AG04449 (cell line): ENCODE measurements at regions of chr5 and their contacts with region 1.

Region 1: DNA sequence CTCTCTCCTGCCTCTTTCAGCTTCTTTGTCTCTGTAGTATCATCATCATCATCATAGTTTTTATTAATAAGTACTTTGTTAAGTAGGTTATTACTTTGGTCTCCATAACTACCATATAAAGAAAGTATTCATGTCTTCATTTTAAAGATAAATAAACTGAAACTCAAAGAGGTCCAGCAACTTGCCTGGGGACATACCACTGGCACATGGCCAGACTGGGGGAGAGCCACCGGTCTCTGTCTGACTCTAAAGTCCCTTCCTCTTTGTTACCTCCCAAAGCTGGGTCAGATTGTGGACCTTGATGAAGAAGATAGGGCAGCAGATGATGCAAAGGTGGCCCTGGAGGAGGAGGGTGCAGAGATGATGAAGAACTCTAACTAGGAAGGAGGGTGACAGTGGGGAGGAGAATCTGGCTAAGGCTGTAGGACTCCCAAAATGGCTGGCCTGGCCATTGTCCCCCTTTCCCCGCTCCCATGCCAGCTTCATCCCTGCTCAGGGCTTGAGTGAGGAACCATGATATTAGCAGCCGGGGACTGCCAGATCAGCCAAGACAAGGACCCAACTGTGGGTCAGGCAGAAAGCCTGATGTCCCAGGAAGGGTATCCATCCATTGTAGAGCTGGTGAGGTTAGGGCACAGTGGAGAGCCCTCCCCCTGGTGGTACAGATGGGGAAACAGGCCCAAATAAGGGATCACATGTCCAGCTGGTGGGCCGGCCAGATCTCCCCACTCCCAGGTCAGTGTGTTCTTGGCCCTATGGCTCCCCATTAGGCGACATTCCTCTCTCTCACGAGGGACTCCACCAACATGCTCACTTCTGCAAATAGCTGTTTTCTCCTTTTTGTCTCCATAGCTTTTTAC is 8.7 kb downstream of the CDX1 start:
- DNase-seq: no peak
- H3K4me3 ChIP-seq: no peak overlapping the region
- CTCF ChIP-seq: peak; percentile 72

Region 2: GRCh38 chr5:149969181-149969930 is 205.9 kb before region 1 on chr5:
- CTCF ChIA-PET with region 1: no interaction called
- POLR2A ChIA-PET with region 1: no interaction called
- DNase-seq: no peak
- H3K4me3 ChIP-seq: no peak overlapping the region
- CTCF ChIP-seq: no peak

Region 3: DNA sequence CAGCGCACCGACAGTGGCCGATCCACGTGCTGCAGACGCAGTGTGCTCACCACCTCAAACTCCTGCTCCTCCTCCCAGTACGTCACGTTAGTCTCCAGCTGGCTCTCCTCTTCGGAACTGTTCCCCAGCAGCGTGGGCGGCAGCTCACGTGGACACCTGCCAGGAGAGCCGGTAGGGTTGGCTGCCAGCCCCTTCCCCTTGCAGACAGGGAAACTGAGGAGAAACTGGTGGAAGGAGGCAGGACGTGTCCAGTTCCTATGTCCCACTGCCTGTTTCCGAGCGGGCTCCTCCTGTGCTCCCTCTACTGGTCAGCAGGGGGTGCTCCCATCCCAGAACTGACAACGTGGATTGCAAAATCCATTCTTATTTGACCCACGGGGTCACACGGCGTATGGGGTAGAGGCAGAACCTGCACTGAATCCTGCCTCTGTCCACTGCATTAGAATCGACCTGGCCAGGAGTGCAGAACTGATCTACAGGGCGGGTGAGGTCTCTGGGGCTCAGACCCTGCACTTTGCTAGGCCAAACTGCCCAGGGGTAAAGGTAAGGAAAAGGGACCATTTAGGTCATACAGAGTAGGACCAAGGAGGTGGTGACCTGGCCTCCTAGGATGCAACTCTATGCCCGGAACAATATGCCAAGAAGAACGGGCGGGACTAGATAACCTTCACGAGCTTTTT is 45.4 kb before region 1 on chr5:
- CTCF ChIA-PET with region 1: interaction called, 18 read pairs
- POLR2A ChIA-PET with region 1: no interaction called
- DNase-seq: no peak
- H3K4me3 ChIP-seq: no peak overlapping the region
- CTCF ChIP-seq: peak; percentile 95

Region 4: GRCh38 chr5:150137168-150137957 is 37.9 kb before region 1 on chr5:
- CTCF ChIA-PET with region 1: interaction called, 18 read pairs
- POLR2A ChIA-PET with region 1: no interaction called
- DNase-seq: no peak
- H3K4me3 ChIP-seq: no peak overlapping the region
- CTCF ChIP-seq: no peak

Region 5: DNA sequence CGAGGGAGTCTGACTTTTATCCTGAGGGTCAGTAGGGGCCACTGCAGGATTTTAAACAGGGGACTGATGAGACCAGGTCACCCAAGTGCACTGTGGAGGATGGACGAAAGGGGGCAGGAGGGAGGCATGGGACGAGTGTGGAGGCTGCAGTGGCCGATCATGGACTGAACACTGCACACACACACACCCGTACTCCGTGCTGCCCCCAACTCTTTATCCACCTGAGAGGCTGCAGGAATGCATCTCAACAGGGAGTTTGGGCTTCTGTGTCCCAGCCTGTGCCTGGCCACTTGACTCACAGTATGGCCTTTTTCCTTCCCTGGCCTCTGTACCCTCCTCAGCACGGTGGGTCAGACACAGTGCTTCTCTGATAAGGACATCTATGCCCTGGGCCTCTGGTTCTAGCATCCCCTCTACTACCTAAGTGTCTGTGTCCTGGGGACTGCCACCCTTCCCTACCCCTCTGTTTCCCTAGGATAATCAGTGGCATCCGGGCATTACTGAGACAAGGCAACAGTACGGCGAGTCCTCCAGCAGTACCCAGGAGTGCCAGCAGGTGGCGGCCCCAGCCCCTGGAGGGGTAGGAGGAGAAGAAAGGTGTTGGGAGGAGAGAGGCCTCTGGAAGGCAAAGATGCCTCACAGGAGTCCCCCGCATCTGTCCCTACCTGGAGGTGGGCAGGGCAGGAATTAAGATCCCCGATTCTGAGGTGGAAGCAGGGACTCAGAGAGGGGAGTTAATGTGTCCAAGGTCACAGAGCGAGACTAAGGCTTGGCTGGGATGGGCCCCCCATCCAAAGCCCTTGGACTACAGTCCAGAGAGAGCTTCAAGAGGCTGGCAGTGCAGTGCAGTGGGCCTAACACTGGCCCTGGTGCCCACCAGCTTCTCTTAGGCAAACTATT is 13.8 kb before region 1 on chr5:
- CTCF ChIA-PET with region 1: interaction called, 176 read pairs
- POLR2A ChIA-PET with region 1: no interaction called
- DNase-seq: no peak
- H3K4me3 ChIP-seq: no peak overlapping the region
- CTCF ChIP-seq: peak; percentile 98

Region 6: GRCh38 chr5:150189728-150190502 is 14.6 kb after region 1 on chr5 and contains the start of gene SLC6A7:
- CTCF ChIA-PET with region 1: interaction called, 23 read pairs
- POLR2A ChIA-PET with region 1: no interaction called
- DNase-seq: no peak
- H3K4me3 ChIP-seq: no peak within 1 kb of the TSS
- CTCF ChIP-seq: no peak

Region 7: DNA sequence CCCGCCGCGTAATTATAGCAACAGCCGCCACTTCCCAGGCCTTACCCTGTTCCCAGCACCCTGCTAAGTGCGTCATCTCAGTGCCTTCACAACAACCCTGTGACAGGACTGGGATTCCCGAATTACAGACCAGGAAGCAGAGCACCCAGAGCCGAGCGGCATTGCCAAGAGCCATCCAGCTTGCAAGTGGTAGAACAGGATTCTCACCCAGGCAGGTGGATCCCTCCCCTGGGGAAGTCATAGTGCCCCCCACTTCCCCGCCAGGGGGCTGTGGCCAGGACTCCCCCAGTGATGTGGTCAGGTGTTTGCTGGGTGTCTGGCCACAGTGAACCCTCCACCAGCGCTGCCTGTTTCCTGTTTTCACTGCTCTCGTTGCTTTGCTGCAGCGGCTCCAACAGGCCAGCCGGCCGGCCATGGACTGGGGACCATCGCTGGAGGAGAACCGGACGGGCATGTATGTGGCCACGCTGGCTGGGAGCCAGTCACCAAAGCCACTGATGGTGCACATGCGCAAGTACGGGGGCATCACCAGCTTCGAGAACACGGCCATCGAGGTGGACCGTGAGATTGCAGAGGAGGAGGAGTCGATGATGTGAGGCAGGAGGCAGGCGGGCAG is 33.8 kb after region 1 on chr5:
- CTCF ChIA-PET with region 1: interaction called, 27 read pairs
- POLR2A ChIA-PET with region 1: no interaction called
- DNase-seq: peak; percentile 16
- H3K4me3 ChIP-seq: no peak overlapping the region
- CTCF ChIP-seq: no peak